GM12878 (cell line): ENCODE measurements at regions of chr4 and their contacts with region 1.

Region 1: GRCh38 chr4:26330186-26330787 is 9.5 kb downstream of the RBPJ start:
- DNase-seq: no peak
- ATAC-seq: peak; percentile 88
- H3K4me3 ChIP-seq: no peak overlapping the region
- H3K27ac ChIP-seq: no peak overlapping the region
- H3K4me1 ChIP-seq: no peaks in the 10 kb centered on the region
- H3K27me3 ChIP-seq: no peaks in the 10 kb centered on the region
- CTCF ChIP-seq: peak; percentile 53 to 66 (median 58)
- EP300 ChIP-seq: no peak
- POLR2A ChIP-seq: no peak
- RAD21 ChIP-seq: peak; percentile 71

Region 2: DNA sequence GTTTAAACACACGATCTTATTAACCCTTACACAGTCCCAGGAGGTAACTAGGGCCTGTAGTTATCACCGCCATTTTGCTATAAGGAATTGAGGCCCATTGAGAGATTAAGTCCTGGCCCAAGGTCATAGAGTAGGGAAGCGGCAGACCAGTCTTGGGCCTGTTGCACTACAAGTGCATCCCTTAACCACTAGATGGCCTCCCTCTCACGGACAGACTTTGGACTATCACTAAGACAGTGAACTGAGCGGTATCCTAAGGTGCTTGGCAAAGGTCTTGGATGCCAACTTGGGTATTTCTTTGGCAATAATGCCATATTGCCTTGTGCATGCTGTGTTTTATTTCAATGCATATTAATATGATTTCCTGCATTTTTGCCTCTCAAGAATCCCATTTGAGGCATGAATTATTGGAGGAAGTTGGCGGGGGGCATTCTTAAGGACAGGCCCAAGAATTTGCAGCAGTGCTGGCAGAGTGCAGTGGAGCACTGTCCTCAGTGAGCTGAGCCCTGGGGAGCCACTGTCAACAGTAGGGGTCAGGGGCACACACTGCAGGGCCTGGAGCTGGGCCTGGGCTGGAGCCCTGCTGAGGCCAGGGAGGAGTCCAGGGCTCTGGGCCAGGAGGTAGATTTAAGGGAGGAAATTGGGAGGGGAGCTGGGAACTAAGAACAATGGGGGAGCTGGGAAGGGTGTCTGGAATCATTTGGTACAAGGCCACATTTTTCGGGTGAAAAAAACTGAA is 268.9 kb before region 1 on chr4:
- CTCF ChIA-PET with region 1: interaction called, 150 read pairs
- POLR2A ChIA-PET with region 1: no interaction called
- RAD21 ChIA-PET with region 1: interaction called, 12 read pairs
- SMC1A ChIA-PET with region 1: interaction called, 24 read pairs
- in situ Hi-C with region 1: no loop called
- intact Hi-C with region 1: no loop called
- DNase-seq: no peak
- ATAC-seq: peak; percentile 96
- H3K4me3 ChIP-seq: no peak overlapping the region
- H3K27ac ChIP-seq: no peak overlapping the region
- H3K4me1 ChIP-seq: peaks cover 9% of the 10 kb centered on the region; the same call in 1 of the 2 replicates
- H3K27me3 ChIP-seq: no peaks in the 10 kb centered on the region; a peak in 3 of 4 replicates
- CTCF ChIP-seq: peak; percentile 64 to 76 (median 76); a peak in 5 of 6 replicates
- EP300 ChIP-seq: no peak
- POLR2A ChIP-seq: no peak
- RAD21 ChIP-seq: peak; percentile 94

Region 3: DNA sequence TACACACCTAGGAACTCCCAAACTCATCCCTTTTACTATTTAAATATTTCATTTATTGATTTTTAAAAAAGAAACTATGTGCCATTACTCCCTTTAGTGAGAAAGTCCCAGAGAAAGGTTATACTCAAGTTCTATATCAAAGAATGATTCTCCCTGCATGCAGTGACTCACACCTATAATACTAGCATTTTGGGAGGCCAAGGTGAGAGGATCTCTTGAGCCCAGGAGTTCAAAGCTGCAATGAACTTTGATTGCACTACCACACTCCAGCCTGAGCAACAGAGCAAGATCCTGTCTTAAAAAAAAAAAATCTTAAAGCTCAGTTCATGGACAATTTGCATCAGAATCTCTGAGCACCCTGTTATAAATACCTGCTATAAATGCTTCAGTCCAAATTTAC is 18.7 kb before region 1 on chr4:
- CTCF ChIA-PET with region 1: interaction called, 12 read pairs
- POLR2A ChIA-PET with region 1: no interaction called
- RAD21 ChIA-PET with region 1: no interaction called
- SMC1A ChIA-PET with region 1: interaction called, 4 read pairs
- in situ Hi-C with region 1: no loop called
- intact Hi-C with region 1: no loop called
- DNase-seq: no peak
- ATAC-seq: peak; percentile 28
- H3K4me3 ChIP-seq: no peak overlapping the region
- H3K27ac ChIP-seq: no peak overlapping the region
- H3K4me1 ChIP-seq: peaks cover 9% of the 10 kb centered on the region; the same call in 1 of the 2 replicates
- H3K27me3 ChIP-seq: no peaks in the 10 kb centered on the region
- CTCF ChIP-seq: no peak
- EP300 ChIP-seq: no peak
- POLR2A ChIP-seq: no peak
- RAD21 ChIP-seq: no peak

Region 4: GRCh38 chr4:26388671-26389070 is 58.4 kb after region 1 on chr4:
- CTCF ChIA-PET with region 1: interaction called, 18 read pairs
- POLR2A ChIA-PET with region 1: no interaction called
- RAD21 ChIA-PET with region 1: interaction called, 6 read pairs
- SMC1A ChIA-PET with region 1: interaction called, 8 read pairs
- in situ Hi-C with region 1: no loop called
- intact Hi-C with region 1: no loop called
- DNase-seq: no peak
- ATAC-seq: no peak
- H3K4me3 ChIP-seq: no peak overlapping the region
- H3K27ac ChIP-seq: no peak overlapping the region
- H3K4me1 ChIP-seq: no peaks in the 10 kb centered on the region
- H3K27me3 ChIP-seq: no peaks in the 10 kb centered on the region
- CTCF ChIP-seq: no peak
- EP300 ChIP-seq: no peak
- POLR2A ChIP-seq: no peak
- RAD21 ChIP-seq: no peak

Region 5: DNA sequence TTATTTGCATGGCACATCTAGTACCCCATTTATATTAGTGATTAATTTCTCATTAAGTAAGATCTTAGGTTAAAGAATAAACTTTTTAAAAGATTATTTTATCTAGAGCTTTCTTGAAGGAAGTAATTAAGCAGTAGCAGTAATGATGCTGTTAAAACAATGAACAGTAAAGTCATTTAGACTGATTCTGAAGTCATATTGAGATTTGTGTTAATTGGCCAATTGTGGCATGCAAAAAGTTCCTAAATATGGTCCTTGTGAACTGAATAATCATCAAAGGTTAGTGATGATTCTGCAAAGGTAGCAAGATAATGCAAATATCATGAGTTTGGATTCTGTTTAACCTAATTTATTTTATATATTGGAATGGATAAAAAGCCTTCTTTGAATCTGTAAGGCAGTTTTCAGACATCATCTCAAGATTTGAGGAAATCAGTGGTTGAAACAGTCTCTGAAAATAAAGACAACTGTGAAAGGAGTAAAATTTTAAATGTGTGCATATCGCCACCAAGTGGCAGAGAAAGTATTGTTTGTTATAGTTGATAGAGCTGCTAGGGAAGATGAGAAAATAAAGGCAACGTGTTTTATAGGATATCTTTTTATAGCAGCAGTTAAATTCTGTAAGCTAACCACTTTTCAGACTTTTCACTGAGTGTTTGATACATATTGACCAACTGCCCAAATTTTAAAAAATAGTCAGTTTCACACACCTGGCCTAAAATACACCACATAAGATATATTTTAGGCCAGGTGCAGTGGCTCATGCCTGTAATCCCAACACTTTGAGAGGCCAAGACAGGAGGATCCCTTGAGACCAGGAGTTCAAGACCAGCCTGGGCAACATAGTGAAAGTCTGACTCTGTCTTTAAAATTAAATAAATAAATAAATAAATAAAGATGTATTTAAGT is 80.4 kb after region 1 on chr4:
- CTCF ChIA-PET with region 1: interaction called, 474 read pairs
- POLR2A ChIA-PET with region 1: interaction called, 3 read pairs
- RAD21 ChIA-PET with region 1: interaction called, 170 read pairs
- SMC1A ChIA-PET with region 1: interaction called, 175 read pairs
- in situ Hi-C with region 1: loop called (anchors 5 kb)
- intact Hi-C with region 1: loop called (anchors 1 kb)
- DNase-seq: peak; percentile 44
- ATAC-seq: peak; percentile 85
- H3K4me3 ChIP-seq: no peak overlapping the region
- H3K27ac ChIP-seq: no peak overlapping the region
- H3K4me1 ChIP-seq: no peaks in the 10 kb centered on the region
- H3K27me3 ChIP-seq: no peaks in the 10 kb centered on the region
- CTCF ChIP-seq: peak; percentile 47 to 71 (median 53); a peak in 5 of 6 replicates
- EP300 ChIP-seq: no peak
- POLR2A ChIP-seq: no peak
- RAD21 ChIP-seq: peak; percentile 86